ENCODE measurements at regions of chr6 and their contacts with region 1.

Region 1: GRCh38 chr6:4775584-4776494 is at the start of gene CDYL:
- DNase-seq: peak; percentile 87
- H3K4me3 Mint-ChIP-seq: peak within 1 kb of the TSS; percentile 98
- H3K27ac Mint-ChIP-seq: peak within 1 kb of the TSS; percentile 88
- H3K4me1 Mint-ChIP-seq: peaks cover 29% of the 10 kb centered on the region
- H3K27me3 Mint-ChIP-seq: peaks cover 21% of the 10 kb centered on the region
- CTCF ChIP-seq: no peak
- total RNA-seq, gene CDYL: 45.2 and 48.9 TPM in 2 replicates

Region 2: DNA sequence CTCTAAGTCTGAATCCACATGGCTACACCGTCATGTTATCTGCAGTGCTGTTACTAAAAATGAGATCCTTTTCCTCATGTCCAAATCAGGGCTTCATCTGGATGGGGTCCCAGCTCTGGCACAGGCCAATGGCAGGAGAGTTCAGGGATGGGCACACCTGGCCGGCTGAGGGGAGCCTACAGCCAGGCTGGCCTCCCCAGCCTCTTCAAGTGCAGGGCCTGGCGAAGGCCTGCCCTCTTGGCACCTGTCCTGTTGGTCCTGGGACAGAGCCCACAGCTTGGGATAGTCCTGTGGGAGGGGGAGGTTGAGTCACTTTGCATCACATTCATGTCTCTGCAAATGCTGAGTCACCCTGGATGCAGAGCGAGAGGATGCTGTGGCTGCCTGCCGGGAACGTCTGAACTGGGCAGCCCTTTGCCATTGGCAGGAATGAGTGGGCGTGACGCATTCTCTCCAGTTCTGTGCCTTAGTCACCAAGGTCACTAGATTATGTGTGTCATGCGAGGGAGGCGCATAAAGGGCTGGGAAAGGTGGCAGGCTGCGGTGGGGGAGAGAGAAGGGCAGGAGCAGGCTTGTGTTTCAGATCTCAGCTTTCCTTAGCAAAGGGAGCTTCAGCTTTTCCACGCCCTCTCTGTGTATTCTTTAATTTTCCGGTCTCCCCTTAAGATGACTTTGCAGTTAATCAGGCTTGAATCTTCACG is 417.3 kb before region 1 on chr6:
- CTCF ChIA-PET with region 1: no interaction called
- intact Hi-C with region 1: loop called (anchors 5 kb)
- DNase-seq: peak; percentile 86
- H3K4me3 Mint-ChIP-seq: peak overlapping the region; percentile 19
- H3K27ac Mint-ChIP-seq: peak overlapping the region; percentile 94
- H3K4me1 Mint-ChIP-seq: peaks cover 31% of the 10 kb centered on the region
- H3K27me3 Mint-ChIP-seq: no peaks in the 10 kb centered on the region
- CTCF ChIP-seq: no peak

Region 3: DNA sequence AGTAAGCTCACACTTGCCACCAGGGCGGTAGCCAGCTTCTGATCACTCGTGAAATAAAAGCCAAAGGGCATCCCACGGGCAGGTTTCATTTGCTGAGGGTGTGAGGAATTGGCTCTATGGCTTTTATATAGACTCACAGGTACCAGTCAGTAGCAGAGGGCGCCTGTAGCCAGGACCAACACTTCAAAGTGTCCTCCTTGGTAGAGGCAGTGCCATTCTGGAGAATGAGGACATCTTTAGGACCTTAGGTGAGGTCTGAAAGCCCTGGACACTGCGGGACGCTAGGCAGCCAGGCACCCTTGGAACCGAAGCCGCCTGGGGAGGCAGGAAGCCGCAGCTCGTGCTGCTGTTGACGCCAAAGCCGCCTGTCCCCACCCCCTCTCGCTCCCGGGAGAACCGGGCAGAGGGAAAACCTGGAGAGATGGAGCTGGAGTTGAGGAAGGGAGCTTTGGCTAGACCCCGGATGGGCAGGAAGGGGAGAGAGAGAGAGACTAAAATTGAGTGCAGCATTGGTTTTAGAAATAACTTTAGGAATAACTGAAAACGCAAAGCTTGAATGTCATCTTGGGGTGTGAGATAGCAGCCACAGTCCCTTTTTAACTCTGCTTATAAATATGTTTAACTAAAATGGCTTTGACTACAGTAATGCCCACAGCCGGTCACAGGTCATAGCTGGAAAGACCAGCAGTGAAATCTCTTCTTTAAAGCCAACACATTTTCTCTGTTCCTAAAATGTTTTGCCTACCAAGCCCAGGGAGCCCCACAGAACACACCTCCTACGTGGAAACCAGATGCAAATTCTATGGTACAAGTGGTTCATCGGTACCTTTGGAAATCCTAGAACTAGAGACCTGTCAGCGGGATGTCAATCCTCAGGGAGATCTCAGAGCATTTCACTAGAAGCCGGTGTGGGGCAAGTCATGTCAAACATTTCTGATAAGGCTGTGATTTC is 128.1 kb before region 1 on chr6:
- CTCF ChIA-PET with region 1: no interaction called
- intact Hi-C with region 1: no loop called
- DNase-seq: peak; percentile 71
- H3K4me3 Mint-ChIP-seq: peak overlapping the region; percentile 57
- H3K27ac Mint-ChIP-seq: no peak overlapping the region
- H3K4me1 Mint-ChIP-seq: peaks cover 7% of the 10 kb centered on the region
- H3K27me3 Mint-ChIP-seq: no peaks in the 10 kb centered on the region
- CTCF ChIP-seq: no peak

Region 4: GRCh38 chr6:4936681-4937041 is 160.8 kb after region 1 on chr6:
- CTCF ChIA-PET with region 1: no interaction called
- intact Hi-C with region 1: loop called (anchors 1 kb)
- DNase-seq: no peak
- H3K4me3 Mint-ChIP-seq: no peak overlapping the region
- H3K27ac Mint-ChIP-seq: no peak overlapping the region
- H3K4me1 Mint-ChIP-seq: peaks cover 15% of the 10 kb centered on the region
- H3K27me3 Mint-ChIP-seq: no peaks in the 10 kb centered on the region
- CTCF ChIP-seq: peak; percentile 33